ENCODE measurements at regions of chr3 and their contacts with region 1.

Region 1: GRCh38 chr3:69051756-69052471 is at the start of gene TMF1:
- DNase-seq: peak; percentile 99
- ATAC-seq: peak; percentile 98
- total RNA-seq, gene TMF1: 19.2 TPM

Region 2: GRCh38 chr3:68007621-68008226 is 1044.2 kb before region 1 on chr3:
- intact Hi-C with region 1: no loop called
- DNase-seq: no peak
- ATAC-seq: no peak

Region 3: GRCh38 chr3:69013253-69014021 is 38.5 kb before region 1 on chr3 and contains the start of gene EOGT:
- intact Hi-C with region 1: loop called (anchors 5 kb)
- DNase-seq: peak; percentile 95
- ATAC-seq: peak; percentile 92
- total RNA-seq, gene EOGT: 25.2 TPM

Region 4: GRCh38 chr3:69080233-69080920 is 28.5 kb after region 1 on chr3 and contains the start of gene UBA3:
- intact Hi-C with region 1: loop called (anchors 2 kb)
- DNase-seq: peak; percentile 96
- ATAC-seq: peak; percentile 88
- total RNA-seq, gene UBA3: 89.1 TPM